ENCODE measurements at regions of chr10 and their contacts with region 1.

Region 1: GRCh38 chr10:49407552-49408137 is 11.8 kb upstream of the DRGX start:
- DNase-seq: peak; percentile 86
- ATAC-seq: peak; percentile 75
- H3K4me3 Mint-ChIP-seq: no peak overlapping the region
- H3K27ac Mint-ChIP-seq: no peak overlapping the region
- H3K4me1 Mint-ChIP-seq: no peaks in the 10 kb centered on the region
- H3K27me3 Mint-ChIP-seq: peaks cover 33% of the 10 kb centered on the region

Region 2: DNA sequence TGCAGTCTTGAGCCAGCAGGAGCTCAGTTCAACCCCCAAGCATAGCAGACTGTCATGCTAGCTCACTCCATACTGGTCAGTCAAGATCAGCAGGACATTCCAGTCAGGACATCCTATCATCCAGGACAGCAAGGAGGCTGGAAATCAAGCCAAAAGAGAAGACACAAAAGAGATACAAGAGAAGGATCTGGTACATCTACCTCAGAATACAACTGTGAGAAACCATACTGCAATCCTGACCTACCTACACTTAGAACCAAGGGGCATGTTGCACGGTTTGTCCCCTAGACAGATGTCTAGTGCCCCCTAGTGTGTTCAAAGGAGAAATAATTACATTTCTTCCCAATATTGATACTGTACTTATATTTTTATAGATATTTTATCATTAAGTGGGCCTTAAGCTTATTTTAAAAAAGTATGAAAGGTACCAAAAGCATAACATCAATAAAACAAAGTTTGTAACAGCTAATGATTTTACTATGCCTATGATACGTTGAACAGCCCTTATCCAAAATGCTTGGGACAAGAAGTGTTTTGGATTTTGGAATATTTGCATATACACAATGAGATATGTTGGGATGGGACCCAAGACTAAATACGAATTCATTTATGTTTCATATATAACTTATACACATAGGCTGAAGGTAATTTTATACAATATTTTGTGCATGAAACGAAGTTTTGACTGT is 104.6 kb after region 1 on chr10:
- CTCF ChIA-PET with region 1: interaction called, 42 read pairs
- POLR2A ChIA-PET with region 1: no interaction called
- intact Hi-C with region 1: loop called (anchors 1 kb)
- DNase-seq: peak; percentile 24
- ATAC-seq: peak; percentile 61
- H3K4me3 Mint-ChIP-seq: no peak overlapping the region
- H3K27ac Mint-ChIP-seq: no peak overlapping the region
- H3K4me1 Mint-ChIP-seq: peaks cover 21% of the 10 kb centered on the region
- H3K27me3 Mint-ChIP-seq: peaks cover 4% of the 10 kb centered on the region

Region 3: DNA sequence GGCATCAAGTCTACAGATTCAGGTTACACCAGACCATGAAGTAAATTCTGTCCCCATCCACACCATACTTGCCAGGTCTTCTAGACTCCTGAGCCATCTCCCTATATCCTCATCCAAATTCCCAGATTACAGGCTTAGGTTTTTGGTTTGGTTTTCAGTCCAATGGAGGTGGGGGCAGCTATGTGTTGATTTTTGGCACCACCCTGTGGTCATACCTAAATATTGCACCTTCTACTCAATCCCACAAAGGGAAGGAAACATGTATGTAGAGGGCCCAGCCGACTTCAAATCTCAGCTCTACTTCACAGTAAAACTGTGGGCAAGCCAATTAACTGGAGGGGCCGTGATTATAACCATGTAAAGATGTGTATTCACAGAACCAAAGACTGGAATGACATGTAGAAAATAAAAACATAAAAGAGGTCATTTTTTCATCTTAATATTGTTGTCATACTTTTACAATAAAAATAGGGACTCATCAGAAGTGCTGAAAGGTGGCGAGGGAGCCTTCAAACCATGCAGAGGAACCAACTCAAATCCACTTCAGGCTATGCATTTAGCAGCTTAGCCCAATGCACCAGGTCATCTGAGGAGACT is 111.4 kb after region 1 on chr10:
- CTCF ChIA-PET with region 1: interaction called, 18 read pairs
- POLR2A ChIA-PET with region 1: no interaction called
- intact Hi-C with region 1: loop called in 1 of 2 experiments (anchors 1 kb)
- DNase-seq: peak; percentile 30
- ATAC-seq: peak; percentile 49
- H3K4me3 Mint-ChIP-seq: no peak overlapping the region
- H3K27ac Mint-ChIP-seq: no peak overlapping the region
- H3K4me1 Mint-ChIP-seq: no peaks in the 10 kb centered on the region
- H3K27me3 Mint-ChIP-seq: no peaks in the 10 kb centered on the region

Measured in activated CD4-positive, alpha-beta T cell treated with anti-CD3 and anti-CD28 coated beads for 36 hours (primary cell).